ENCODE measurements at regions of chr7 and their contacts with region 1.

Region 1: DNA sequence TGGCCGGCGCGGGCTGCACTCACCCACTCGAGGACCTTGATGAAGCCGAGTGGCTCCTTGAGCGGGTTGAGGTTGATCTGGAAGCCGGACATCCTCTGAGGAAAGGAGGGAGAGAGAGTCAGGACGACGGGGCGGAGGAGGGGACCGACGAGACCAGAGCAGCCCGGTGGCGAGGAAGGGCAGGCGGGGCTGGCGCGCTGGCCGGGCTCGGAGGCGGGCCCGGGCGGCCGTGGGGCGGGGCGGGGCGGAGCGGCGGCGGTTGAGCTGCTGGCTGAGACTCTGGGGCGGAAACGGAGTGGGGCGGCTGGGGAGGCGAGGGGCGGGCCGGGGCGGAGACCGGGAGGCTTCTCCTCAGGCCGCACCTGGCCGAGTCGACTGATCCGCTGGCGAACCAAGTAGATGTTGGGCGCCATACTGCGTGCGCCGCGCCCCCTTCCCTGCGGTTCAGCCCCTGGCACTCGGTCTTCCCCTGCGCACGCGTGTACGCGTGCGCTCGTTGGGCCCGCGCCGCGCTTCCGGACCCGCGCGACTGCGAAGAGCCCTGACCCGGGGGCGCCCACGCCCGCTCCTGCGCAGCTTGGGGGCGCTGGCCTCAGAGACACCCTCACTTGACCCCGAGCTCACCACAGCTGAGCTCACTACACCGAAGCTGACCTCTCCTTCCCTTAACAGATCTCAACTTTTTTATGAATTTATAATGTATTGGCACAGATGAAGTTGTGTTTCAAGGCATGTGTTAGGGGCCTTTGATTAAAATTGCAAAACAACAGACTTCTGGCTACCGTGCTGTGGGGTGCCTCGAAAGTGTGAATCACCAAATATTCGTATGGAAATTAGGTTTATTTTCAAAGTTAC is at the start of gene SYPL1:
- DNase-seq: peak; percentile 87 to 97 (median 92)
- ATAC-seq: peak; percentile 87
- H3K4me3 Mint-ChIP-seq: peak within 1 kb of the TSS; percentile 84 to 94 (median 90)
- H3K27ac Mint-ChIP-seq: peak within 1 kb of the TSS; percentile 94 to 99 (median 98)
- H3K4me1 Mint-ChIP-seq: peaks cover 43 to 80% (median 73%) of the 10 kb centered on the region in 4 donors
- H3K27me3 Mint-ChIP-seq: no peaks in the 10 kb centered on the region
- polyA plus RNA-seq, gene SYPL1: 67.5 to 78.4 (median 68.8) TPM

Region 2: DNA sequence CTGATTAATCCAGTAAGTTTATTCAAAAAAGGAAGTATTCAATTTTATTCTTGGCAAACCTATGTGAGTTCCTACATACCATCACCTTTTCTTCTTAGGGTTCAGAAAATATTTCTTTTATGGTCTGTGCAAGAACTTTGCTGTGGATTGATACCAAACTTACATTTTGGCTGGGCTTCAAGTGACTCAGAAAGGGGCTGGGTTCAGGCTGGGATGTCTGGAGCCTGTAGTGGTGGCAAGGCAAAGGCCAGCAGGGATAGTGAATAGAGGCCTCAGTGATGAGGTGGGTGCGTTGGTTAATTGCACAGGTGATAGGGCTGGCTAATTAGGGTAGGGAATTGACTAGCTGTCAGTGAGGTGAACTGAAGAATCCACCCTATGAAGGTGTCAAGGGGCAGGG is 195.7 kb before region 1 on chr7:
- POLR2A ChIA-PET with region 1: no interaction called
- DNase-seq: no peak
- ATAC-seq: no peak
- H3K4me3 Mint-ChIP-seq: no peak overlapping the region
- H3K27ac Mint-ChIP-seq: no peak overlapping the region
- H3K4me1 Mint-ChIP-seq: peaks cover 0 to 12% (median 6%) of the 10 kb centered on the region in 4 donors
- H3K27me3 Mint-ChIP-seq: no peaks in the 10 kb centered on the region

Region 3: DNA sequence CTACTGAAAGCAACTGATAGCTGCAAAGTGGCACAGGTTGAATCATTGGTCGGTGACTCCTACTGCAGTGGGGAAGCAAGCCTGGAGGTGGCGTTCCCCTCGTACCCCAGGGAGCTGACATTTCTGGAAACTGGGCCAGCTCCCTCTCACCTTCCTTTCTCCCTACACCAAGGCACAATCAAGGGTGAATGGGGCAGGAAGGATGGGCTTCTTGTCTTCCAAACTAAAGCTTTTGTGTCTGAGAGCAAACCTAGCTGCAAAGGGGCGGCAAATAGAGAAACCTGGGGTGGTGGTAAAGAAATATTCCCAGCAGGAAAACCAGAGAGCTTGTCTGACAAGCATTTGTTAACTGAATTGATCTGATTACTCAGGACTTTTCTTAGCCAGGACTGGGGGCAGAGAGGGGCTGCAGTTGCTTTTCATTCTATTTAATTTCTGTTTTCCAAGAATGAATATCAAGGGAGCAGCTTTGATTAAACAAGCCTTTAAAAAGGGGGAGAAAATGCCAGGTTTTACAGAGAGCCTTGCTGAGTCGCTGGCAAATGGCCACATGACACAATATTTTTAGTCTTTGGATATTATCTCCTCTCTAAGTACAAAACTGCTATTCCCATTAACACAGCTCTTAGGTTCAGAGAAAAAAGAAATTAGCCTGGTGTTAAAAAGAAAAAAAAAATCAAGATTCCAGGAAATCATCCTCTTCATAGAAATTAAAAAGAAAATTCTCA is 121.5 kb before region 1 on chr7:
- POLR2A ChIA-PET with region 1: no interaction called
- DNase-seq: no peak
- ATAC-seq: no peak
- H3K4me3 Mint-ChIP-seq: no peak overlapping the region
- H3K27ac Mint-ChIP-seq: no peak overlapping the region
- H3K4me1 Mint-ChIP-seq: peaks cover 3 to 20% (median 20%) of the 10 kb centered on the region in 4 donors
- H3K27me3 Mint-ChIP-seq: peaks cover 0 to 11% (median 0%) of the 10 kb centered on the region in 5 donors

Region 4: DNA sequence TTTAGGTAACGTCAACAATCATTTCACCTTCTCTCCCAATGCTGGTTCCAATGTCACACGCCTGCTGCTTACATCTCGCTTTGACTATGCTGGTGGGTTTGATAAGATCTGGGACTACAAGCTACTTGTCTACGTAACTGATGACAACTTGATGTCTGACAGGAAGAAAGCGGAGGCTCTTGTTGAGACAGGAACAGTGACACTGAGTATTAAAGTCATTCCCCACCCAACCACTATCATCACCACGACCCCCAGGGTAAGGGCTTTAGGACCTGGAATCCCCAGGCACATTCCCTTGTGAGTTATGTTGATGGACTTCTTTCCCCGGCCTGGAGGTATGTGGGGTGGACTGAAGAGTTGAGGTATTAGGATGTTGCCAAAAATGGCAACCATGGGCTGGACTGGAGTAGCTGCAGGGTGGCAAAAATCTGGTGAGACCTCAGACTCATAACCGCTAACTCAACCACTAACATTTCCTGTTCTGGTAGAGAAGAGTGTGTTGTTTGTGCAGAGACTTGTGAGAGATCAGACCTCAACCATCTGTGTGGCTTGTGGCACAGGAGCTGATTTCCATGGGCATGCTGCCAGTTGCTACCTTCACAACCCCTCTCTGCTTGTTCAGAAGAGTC is 90.0 kb before region 1 on chr7:
- POLR2A ChIA-PET with region 1: interaction called, 12 read pairs
- DNase-seq: peak; percentile 45 to 97 (median 90)
- ATAC-seq: peak; percentile 80 to 86
- H3K4me3 Mint-ChIP-seq: peak overlapping the region; percentile 49 to 80 (median 71)
- H3K27ac Mint-ChIP-seq: peak overlapping the region; percentile 83 to 99 (median 98)
- H3K4me1 Mint-ChIP-seq: peaks cover 32 to 80% (median 77%) of the 10 kb centered on the region in 4 donors
- H3K27me3 Mint-ChIP-seq: peaks cover 0 to 3% (median 0%) of the 10 kb centered on the region in 5 donors

Region 5: GRCh38 chr7:106056513-106057203 is 55.7 kb before region 1 on chr7:
- POLR2A ChIA-PET with region 1: interaction called, 13 read pairs
- DNase-seq: peak; percentile 47 to 86 (median 68)
- ATAC-seq: peak; percentile 95 to 96
- H3K4me3 Mint-ChIP-seq: peak overlapping the region in 7 of 10 donors; percentile 38 to 58 (median 49)
- H3K27ac Mint-ChIP-seq: peak overlapping the region in 1 of 10 donors; percentile 53
- H3K4me1 Mint-ChIP-seq: peaks cover 7 to 43% (median 27%) of the 10 kb centered on the region in 4 donors
- H3K27me3 Mint-ChIP-seq: no peaks in the 10 kb centered on the region

Region 6: DNA sequence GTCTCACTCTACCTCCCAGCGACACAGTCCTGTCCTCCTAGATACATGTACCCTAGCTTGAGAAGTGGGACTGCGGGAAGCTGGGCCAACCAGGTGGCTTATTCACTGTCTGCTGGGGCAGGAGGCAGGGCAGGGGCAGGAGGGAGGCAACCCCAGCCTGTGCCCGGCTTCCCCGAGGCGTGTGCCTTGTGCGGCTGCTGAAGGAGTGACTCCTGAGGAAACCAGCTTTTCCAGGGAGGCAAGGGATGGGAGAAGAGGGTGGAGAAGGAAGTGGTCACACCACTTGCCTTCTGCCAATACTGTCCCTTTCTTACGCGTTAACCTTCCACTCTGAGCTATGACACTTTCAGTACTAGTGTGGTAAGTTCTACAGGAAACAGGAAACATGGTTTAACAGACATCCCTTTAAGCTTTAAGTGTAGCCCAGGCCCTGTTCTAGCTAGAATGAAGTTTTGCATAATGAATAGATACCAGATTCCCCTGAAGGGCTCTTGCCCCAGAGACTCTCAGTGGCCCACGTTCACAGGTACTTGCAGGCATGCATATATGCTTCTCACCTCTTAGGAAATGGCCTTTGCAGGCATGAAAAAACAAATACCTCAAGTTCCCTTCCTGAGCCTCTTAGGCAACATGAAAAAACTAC is 40.9 kb before region 1 on chr7:
- POLR2A ChIA-PET with region 1: interaction called, 149 read pairs
- DNase-seq: peak in 7 of 10 donors; percentile 19 to 76 (median 52)
- ATAC-seq: peak; percentile 97
- H3K4me3 Mint-ChIP-seq: peak overlapping the region; percentile 69 to 84 (median 78)
- H3K27ac Mint-ChIP-seq: peak overlapping the region; percentile 94 to 99 (median 96)
- H3K4me1 Mint-ChIP-seq: peaks cover 34 to 80% (median 64%) of the 10 kb centered on the region in 4 donors
- H3K27me3 Mint-ChIP-seq: no peaks in the 10 kb centered on the region

Region 7: DNA sequence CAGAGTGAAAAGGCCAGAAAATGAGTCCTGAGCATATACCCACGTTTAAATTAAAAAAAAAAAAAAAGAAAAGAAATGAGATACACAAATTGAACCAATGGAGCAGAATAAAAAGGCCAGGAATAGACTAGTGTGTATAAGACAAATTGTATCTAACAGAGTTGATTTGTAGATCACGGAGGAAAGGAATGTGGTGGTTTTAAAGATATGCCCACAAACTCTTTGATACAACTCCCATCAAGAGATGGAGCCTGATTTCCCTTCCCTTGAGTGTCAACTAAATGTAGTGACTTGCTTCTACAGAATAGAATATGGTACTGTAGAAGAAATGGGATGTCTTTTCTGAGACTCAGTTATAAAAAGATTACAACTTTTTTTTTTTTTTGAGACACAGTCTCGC is 10.6 kb before region 1 on chr7:
- POLR2A ChIA-PET with region 1: interaction called, 23 read pairs
- DNase-seq: no peak
- ATAC-seq: peak in 1 of 2 donors; percentile 35
- H3K4me3 Mint-ChIP-seq: peak overlapping the region in 1 of 10 donors; percentile 20
- H3K27ac Mint-ChIP-seq: peak overlapping the region in 4 of 10 donors; percentile 10 to 73 (median 50)
- H3K4me1 Mint-ChIP-seq: peaks cover 36 to 73% (median 73%) of the 10 kb centered on the region in 4 donors
- H3K27me3 Mint-ChIP-seq: no peaks in the 10 kb centered on the region

Region 8: GRCh38 chr7:106126170-106126938 is 14.0 kb after region 1 on chr7:
- POLR2A ChIA-PET with region 1: interaction called, 40 read pairs
- DNase-seq: peak in 9 of 10 donors; percentile 10 to 78 (median 48)
- ATAC-seq: peak; percentile 82 to 85
- H3K4me3 Mint-ChIP-seq: peak overlapping the region in 9 of 10 donors; percentile 2 to 77 (median 62)
- H3K27ac Mint-ChIP-seq: peak overlapping the region in 4 of 10 donors; percentile 7 to 36 (median 27)
- H3K4me1 Mint-ChIP-seq: peaks cover 8 to 22% (median 15%) of the 10 kb centered on the region in 4 donors
- H3K27me3 Mint-ChIP-seq: peaks cover 0 to 5% (median 0%) of the 10 kb centered on the region in 5 donors

Region 9: DNA sequence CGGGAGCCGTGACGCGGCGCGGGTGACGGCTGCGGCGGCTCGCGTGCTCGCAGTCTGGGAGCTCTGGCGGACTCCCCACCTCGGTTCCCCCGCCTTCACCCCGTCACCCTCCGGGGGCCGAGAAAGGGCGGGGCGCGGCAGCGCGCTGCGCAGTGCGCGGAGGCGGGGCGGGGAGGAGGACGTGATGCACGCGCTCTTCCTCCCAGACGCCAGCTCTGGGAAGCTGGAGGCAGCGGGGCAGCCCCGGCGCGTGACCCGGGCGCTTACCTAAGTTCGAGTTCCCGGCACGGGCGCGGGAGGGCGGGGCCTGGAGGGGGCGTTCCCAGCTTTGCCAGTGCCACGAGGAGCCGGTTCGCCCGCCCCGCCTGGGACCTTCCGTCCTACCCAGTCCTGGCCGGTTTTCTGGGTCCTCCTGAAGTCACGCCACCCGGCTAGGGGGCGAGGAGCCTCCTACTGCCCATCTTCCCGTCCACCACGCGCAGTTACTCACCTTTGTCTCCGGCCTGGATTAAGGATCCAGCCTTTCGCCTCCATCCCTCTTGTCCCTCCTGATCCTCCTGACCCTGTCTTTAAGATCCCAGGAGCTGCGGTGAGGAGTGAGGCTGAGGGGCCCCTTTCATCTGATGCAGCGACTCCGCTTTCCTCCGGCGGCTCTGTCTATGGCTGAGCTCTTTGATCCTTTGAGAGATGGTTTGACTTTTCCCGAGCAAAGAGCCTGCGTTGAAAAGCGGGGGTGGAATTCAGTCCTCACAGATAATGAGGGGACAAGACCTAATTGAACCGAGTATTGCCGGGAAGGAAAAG is 172.9 kb after region 1 on chr7:
- POLR2A ChIA-PET with region 1: interaction called, 22 read pairs
- DNase-seq: peak; percentile 89 to 99 (median 96)
- ATAC-seq: peak; percentile 85 to 88
- H3K4me3 Mint-ChIP-seq: peak overlapping the region; percentile 89 to 98 (median 96)
- H3K27ac Mint-ChIP-seq: peak overlapping the region; percentile 78 to 99 (median 98)
- H3K4me1 Mint-ChIP-seq: peaks cover 8 to 41% (median 27%) of the 10 kb centered on the region in 4 donors
- H3K27me3 Mint-ChIP-seq: no peaks in the 10 kb centered on the region

Measured in naive thymus-derived CD8-positive, alpha-beta T cell (primary cell).